Aorta (tissue), 5 donors: ENCODE measurements at regions of chr22 and their contacts with region 1.

Region 1: GRCh38 chr22:45318168-45318557 is 8.4 kb downstream of the FAM118A start:
- DNase-seq: peak; percentile 90 to 95
- ATAC-seq: peak; percentile 80
- H3K4me3 ChIP-seq: no peak overlapping the region
- H3K27ac ChIP-seq: peak overlapping the region; percentile 84 to 86
- H3K4me1 ChIP-seq: peaks cover 0 to 2% of the 10 kb centered on the region in 2 donors
- H3K27me3 ChIP-seq: no peaks in the 10 kb centered on the region

Region 2: GRCh38 chr22:45413368-45414211 is 95.4 kb after region 1 on chr22 and contains the starts of genes RIBC2 and SMC1B:
- intact Hi-C with region 1: loop called in 1 of 2 experiments (anchors 5 kb)
- DNase-seq: peak; percentile 88 to 93
- ATAC-seq: peak; percentile 93
- H3K4me3 ChIP-seq: peak within 1 kb of the TSS; percentile 0 to 20
- H3K27ac ChIP-seq: no peak within 1 kb of the TSS
- H3K4me1 ChIP-seq: no peaks in the 10 kb centered on the region
- H3K27me3 ChIP-seq: no peaks in the 10 kb centered on the region
- total RNA-seq, gene RIBC2: 0.55 to 1.2 TPM
- total RNA-seq, gene SMC1B: not detected

Region 3: DNA sequence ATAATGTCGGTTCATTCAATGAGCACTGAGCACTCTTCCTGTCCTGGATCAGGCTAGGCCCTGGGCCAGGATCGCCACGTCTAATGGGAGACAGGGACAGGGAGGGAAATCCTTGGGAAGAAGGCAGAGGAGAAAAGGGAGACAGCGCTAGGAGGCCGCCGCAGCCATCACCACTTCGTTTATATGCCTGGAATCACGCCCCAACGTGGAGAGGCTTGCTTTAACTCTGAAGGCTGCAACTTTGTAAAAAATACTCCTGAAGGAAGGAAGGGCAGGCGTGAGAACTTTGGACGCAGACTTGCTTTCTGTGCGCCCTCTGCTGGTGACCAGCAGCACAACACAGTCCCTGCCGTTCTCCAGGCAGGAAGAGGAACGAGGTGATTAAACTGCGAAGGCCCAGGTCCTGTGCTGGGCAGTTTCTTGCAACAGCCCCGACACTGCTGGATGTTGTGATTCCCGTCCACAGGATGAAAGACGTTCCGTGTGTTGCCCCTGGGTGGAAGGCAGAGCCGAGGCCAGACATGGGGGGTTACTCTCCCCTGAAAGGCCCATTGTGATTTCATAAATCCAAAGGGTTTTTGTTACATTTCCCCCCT is 117.5 kb after region 1 on chr22:
- intact Hi-C with region 1: loop called in 1 of 2 experiments (anchors 5 kb)
- DNase-seq: peak; percentile 91 to 95
- ATAC-seq: peak; percentile 96
- H3K4me3 ChIP-seq: no peak overlapping the region
- H3K27ac ChIP-seq: peak overlapping the region in 1 of 2 donors; percentile 32
- H3K4me1 ChIP-seq: no peaks in the 10 kb centered on the region
- H3K27me3 ChIP-seq: no peaks in the 10 kb centered on the region

Region 4: GRCh38 chr22:45511847-45512281 is 193.7 kb after region 1 on chr22:
- intact Hi-C with region 1: no loop called
- DNase-seq: peak; percentile 80 to 86
- ATAC-seq: peak; percentile 81
- H3K4me3 ChIP-seq: no peak overlapping the region
- H3K27ac ChIP-seq: peak overlapping the region in 1 of 2 donors; percentile 25
- H3K4me1 ChIP-seq: no peaks in the 10 kb centered on the region
- H3K27me3 ChIP-seq: no peaks in the 10 kb centered on the region